ENCODE measurements at regions of chr4 and their contacts with region 1.

Region 1: GRCh38 chr4:74623041-74623440 is 171.3 kb downstream of the BTC start:
- DNase-seq: peak; percentile 54
- H3K4me3 Mint-ChIP-seq: no peak overlapping the region
- H3K27ac Mint-ChIP-seq: peak overlapping the region; percentile 89
- H3K4me1 Mint-ChIP-seq: peaks cover 74% of the 10 kb centered on the region
- H3K27me3 Mint-ChIP-seq: no peaks in the 10 kb centered on the region
- CTCF ChIP-seq: no peak

Region 2: DNA sequence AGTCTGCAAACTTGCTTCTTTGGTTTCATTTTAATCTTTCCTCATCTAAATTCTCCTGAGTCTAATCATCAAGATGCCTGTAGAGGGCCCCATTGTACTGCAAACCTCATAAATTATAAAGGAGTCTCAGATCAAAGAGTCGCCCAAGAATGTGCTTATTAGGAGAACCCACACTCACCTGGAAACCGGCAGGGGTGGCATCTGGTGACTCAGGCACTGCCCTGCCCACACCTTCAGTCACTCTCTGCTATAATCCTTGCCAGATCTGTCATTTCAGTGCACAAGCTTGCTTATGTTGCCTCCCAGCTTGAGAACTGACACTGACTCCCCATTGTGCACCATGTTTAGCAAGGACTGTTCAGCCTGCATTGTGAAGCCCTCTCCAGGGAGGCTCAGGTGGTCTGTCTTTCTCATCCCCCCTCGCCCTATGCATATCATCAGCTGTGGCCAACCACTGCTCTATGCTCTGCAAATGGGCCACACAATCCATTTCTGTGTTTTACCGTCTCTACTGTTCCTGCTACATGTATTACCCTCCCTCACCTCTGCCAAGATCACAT is 302.4 kb before region 1 on chr4:
- CTCF ChIA-PET with region 1: no interaction called
- intact Hi-C with region 1: loop called (anchors 2 kb)
- DNase-seq: peak; percentile 85
- H3K4me3 Mint-ChIP-seq: peak overlapping the region; percentile 56
- H3K27ac Mint-ChIP-seq: peak overlapping the region; percentile 58
- H3K4me1 Mint-ChIP-seq: peaks cover 15% of the 10 kb centered on the region
- H3K27me3 Mint-ChIP-seq: no peaks in the 10 kb centered on the region
- CTCF ChIP-seq: peak; percentile 54

Region 3: GRCh38 chr4:74394476-74395136 is 228.4 kb before region 1 on chr4:
- CTCF ChIA-PET with region 1: no interaction called
- intact Hi-C with region 1: loop called (anchors 5 kb)
- DNase-seq: no peak
- H3K4me3 Mint-ChIP-seq: peak overlapping the region; percentile 27
- H3K27ac Mint-ChIP-seq: peak overlapping the region; percentile 87
- H3K4me1 Mint-ChIP-seq: peaks cover 48% of the 10 kb centered on the region
- H3K27me3 Mint-ChIP-seq: no peaks in the 10 kb centered on the region
- CTCF ChIP-seq: no peak

Region 4: DNA sequence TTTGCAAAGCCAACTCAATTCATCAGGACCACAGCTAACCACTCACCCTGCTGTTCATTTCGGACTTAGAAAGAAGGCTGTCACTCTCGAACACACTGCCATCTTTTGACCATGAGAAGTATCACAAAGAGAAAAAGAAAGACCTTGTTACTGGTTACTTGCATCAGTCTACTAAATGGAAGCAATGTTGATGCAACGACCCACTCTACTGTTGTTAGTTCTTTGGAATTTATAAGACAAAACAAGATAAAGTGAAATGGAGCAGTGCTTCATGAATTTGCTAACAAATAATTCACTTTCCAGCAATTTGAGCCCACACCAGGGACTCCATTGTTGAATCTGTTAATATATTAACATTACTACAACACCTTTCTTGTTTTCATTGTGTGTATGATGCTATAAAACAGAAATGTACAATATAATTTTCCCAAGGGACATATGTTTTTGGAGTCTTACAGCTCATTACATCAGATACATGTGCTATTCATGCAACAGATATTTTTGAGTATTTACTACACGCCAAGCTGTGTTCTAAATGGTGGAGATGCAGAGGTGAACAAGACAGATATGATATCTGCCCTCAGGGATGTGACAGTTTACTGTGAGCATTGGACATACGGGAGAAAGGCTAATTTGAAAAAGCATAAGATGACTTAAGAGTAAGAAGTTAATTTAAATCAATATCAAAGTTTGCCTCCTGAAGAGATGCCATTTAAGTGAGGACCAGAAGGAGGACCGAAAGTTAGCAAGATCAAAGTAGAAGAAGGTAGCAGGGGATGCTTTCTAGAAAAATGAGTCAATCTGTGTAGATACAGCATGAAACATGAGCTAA is 90.9 kb before region 1 on chr4:
- CTCF ChIA-PET with region 1: interaction called, 37 read pairs
- intact Hi-C with region 1: loop called (anchors 1 kb)
- DNase-seq: peak; percentile 40
- H3K4me3 Mint-ChIP-seq: peak overlapping the region; percentile 52
- H3K27ac Mint-ChIP-seq: peak overlapping the region; percentile 99
- H3K4me1 Mint-ChIP-seq: peaks cover 39% of the 10 kb centered on the region
- H3K27me3 Mint-ChIP-seq: no peaks in the 10 kb centered on the region
- CTCF ChIP-seq: peak; percentile 33

Region 5: GRCh38 chr4:74545488-74545887 is 77.6 kb before region 1 on chr4:
- CTCF ChIA-PET with region 1: interaction called, 37 read pairs
- intact Hi-C with region 1: loop called (anchors 1 kb)
- DNase-seq: peak; percentile 38
- H3K4me3 Mint-ChIP-seq: no peak overlapping the region
- H3K27ac Mint-ChIP-seq: no peak overlapping the region
- H3K4me1 Mint-ChIP-seq: peaks cover 12% of the 10 kb centered on the region
- H3K27me3 Mint-ChIP-seq: no peaks in the 10 kb centered on the region
- CTCF ChIP-seq: no peak

Region 6: GRCh38 chr4:74659576-74660411 is 36.8 kb after region 1 on chr4:
- CTCF ChIA-PET with region 1: interaction called, 9 read pairs
- intact Hi-C with region 1: loop called (anchors 2 kb)
- DNase-seq: peak; percentile 69
- H3K4me3 Mint-ChIP-seq: peak overlapping the region; percentile 53
- H3K27ac Mint-ChIP-seq: peak overlapping the region; percentile 97
- H3K4me1 Mint-ChIP-seq: peaks cover 60% of the 10 kb centered on the region
- H3K27me3 Mint-ChIP-seq: no peaks in the 10 kb centered on the region
- CTCF ChIP-seq: no peak

Region 7: DNA sequence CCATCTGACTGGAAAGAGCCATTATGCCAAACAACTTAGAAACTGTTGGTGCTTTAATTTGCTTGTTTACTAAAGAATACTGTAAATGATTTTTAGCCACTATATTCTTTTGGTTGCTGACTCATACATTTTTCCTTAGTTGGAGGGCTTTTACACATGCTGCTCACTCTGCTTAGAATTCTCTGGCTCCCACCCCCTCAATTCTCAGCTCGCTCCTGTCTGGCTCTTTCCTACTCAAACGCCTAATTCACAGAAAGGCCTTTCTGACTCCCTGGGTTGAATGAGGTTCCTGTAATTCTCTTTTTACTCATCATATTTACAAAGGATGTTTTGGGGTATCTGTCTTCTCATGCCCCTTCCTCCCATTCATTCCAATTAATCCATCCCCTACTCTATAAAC is 283.7 kb after region 1 on chr4:
- CTCF ChIA-PET with region 1: no interaction called
- intact Hi-C with region 1: no loop called
- DNase-seq: no peak
- H3K4me3 Mint-ChIP-seq: no peak overlapping the region
- H3K27ac Mint-ChIP-seq: no peak overlapping the region
- H3K4me1 Mint-ChIP-seq: no peaks in the 10 kb centered on the region
- H3K27me3 Mint-ChIP-seq: peaks cover 3% of the 10 kb centered on the region
- CTCF ChIP-seq: no peak

Measured in Calu3 (cell line).